ENCODE measurements at regions of chrX and their contacts with region 1.

Region 1: DNA sequence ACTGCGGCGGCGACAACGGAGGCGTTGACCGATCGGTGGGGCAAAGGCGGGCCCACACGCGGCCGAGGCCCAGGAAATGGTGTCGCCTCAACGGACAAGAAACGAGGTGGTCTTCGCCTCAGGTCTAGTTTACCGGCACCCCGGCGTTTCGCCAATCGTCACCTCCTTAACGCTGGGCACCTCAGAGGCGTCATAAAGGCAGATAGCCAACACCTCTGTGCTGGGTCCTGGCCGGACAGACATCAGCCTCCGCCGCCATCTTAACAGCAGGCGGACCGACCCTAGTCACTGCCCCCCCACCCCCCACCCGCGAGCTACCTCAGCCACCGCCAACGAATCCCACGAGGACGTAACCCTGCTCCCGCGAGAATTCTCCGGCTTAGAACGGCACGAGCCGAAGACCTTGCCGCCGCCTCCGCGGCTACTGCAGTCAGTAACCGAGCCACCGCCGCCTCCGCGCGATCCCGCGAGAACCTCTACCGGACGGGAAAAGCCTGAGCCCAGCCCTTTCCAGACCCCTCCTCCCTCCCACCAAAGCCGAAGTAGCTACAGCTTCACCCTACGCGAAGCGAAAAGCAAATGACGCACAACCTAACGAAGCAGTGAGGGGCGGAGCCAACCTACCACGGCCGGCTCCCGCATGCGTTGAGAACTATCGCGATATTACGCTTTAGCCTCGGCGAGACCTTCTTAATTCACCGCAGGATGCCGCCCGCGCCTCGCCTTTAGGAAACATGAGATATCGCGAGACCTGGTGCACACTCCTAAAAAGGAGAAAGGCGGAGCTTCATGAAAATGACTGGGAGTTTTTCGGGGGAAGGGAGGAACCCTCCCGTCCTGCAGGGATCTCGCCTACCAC is 2.7 kb downstream of the HUWE1 start:
- DNase-seq: peak; percentile 94
- H3K4me3 ChIP-seq: peak overlapping the region; percentile 80
- H3K27ac ChIP-seq: peak overlapping the region; percentile 94
- H3K27me3 ChIP-seq: no peaks in the 10 kb centered on the region
- CTCF ChIP-seq: no peak

Region 2: DNA sequence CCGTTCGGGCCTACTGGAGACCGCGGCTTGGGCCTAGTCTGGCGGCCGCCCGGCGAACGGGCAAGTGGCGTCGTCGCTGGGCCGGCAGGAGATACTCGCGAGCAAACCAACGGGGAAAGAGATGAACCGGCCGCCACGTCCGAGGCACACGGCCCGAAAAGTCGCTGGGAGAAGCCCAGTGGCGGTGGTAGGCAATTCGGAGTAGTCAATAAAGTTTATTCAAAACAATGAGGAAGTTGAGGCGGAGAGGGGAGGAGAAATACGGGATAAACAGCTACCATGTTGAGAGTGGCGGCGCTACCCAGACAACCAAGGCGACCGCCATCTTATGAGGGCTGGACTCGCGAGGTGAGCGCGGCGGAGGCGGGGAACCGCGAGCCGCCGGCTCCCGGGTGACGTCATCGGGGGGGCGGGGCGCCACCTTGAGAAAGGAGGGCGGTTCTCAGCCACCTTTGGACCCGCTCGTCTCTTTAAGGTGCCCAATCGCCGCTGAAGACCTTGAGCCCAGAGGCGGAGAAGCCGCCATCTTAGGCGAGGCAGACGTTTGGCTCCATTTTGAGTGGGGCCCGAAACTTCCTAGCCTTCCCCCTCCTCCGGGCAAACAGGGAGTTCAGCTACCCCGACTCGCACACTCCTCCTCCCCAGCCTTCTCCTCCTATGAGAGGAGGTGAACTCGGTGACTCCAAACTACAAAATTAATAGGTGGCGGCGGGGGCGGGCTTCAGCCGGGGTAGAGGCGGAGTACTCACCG is 360.5 kb after region 1 on chrX and contains the start of gene PHF8:
- CTCF ChIA-PET with region 1: no interaction called
- POLR2A ChIA-PET with region 1: interaction called, 26 read pairs
- DNase-seq: peak; percentile 85
- H3K4me3 ChIP-seq: peak within 1 kb of the TSS; percentile 70
- H3K27ac ChIP-seq: peak within 1 kb of the TSS; percentile 91
- H3K27me3 ChIP-seq: no peaks in the 10 kb centered on the region
- CTCF ChIP-seq: no peak
- polyA plus RNA-seq, gene PHF8: 9.7 and 11.2 TPM in 2 replicates

Measured in AG04450 (cell line).